ENCODE measurements at regions of chr5 and their contacts with region 1.

Region 1: DNA sequence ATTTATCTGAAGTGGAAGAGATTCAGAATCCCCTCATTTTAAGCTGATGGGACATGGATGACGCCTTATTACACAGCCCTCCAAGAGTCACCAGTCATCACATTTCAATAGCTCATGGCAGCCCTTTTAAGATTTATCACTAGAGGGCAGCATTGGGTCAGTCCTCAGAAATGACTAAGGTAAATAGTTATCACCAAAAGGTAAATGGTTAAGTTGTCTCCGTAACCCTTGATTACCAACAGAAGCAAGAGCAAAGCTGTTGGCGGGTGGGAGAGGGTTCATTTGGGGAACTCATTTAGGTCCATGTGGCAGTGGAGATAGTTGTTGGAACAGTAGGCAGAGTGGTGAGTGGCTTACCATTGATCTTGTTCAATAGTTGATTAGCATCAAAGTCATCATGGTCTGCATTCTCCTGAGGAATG is 12.0 kb upstream of the C9 start:
- DNase-seq: no peak
- H3K4me3 ChIP-seq: no peak overlapping the region
- H3K27ac ChIP-seq: no peak overlapping the region
- H3K4me1 ChIP-seq: peaks cover 0 to 3% (median 0%) of the 10 kb centered on the region in 4 donors
- H3K27me3 ChIP-seq: no peaks in the 10 kb centered on the region
- CTCF ChIP-seq: peak; percentile 47 to 81 (median 70)
- EP300 ChIP-seq: no peak
- POLR2A ChIP-seq: no peak

Region 2: GRCh38 chr5:39217365-39218281 is 158.7 kb before region 1 on chr5:
- intact Hi-C with region 1: loop called (anchors 10 kb)
- DNase-seq: peak; percentile 93
- H3K4me3 ChIP-seq: no peak overlapping the region
- H3K27ac ChIP-seq: peak overlapping the region in 3 of 4 donors; percentile 38 to 74 (median 73)
- H3K4me1 ChIP-seq: peaks cover 0 to 21% (median 13%) of the 10 kb centered on the region in 4 donors
- H3K27me3 ChIP-seq: no peaks in the 10 kb centered on the region
- CTCF ChIP-seq: peak; percentile 88 to 94 (median 90)
- EP300 ChIP-seq: no peak
- POLR2A ChIP-seq: no peak

Region 3: DNA sequence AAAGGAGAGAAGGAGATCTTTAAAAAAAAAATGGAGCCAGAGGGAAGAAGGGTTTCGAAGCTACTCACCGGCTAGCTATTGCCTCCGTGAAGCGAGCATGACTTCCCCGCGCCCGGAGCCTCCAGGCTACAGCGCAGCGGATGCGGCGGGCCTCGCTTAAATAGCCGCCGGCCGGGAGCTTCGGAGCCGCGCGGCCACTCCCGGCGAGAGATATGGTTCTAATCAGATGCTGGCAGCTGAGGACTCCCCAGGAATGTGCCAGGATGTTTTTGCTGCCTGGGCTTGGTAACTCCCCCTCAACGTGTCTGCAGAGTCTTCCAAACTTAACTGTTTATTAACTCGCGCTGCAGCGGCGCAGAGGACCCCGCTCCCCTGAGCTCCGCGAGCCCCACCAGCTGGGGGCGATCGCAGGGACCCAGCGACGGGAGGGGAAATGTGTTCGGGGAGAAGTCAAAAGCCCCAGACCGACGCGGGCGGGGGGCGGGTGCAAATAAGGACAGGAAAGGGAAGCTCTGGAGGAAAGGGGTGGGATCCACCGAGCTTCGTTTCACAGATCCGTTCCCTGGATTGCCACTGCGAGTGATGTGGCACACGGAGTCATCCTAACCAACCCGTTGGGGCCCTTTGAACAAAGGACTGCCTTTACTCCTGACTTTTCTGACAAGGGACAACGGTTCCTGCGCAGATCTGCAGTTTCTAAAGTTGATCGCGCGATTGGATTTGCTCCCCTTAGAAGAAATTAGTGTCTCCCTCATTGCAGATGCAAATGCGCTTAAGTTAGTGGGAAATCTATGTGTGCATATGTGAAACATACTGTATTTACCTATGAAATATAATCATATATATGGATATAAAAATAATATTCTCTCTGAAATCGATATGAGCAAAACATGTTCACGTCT is 48.7 kb after region 1 on chr5 and contains the start of gene DAB2:
- intact Hi-C with region 1: loop called (anchors 5 kb)
- DNase-seq: peak; percentile 92
- H3K4me3 ChIP-seq: peak within 1 kb of the TSS; percentile 51 to 69 (median 60)
- H3K27ac ChIP-seq: peak within 1 kb of the TSS; percentile 84 to 91 (median 87)
- H3K4me1 ChIP-seq: peaks cover 0 to 47% (median 27%) of the 10 kb centered on the region in 4 donors
- H3K27me3 ChIP-seq: no peaks in the 10 kb centered on the region
- CTCF ChIP-seq: peak in 3 of 4 experiments; percentile 38 to 50 (median 43)
- EP300 ChIP-seq: no peak
- POLR2A ChIP-seq: peak in 1 of 2 donors; percentile 68
- total RNA-seq, gene DAB2: 55.0 to 74.1 (median 59.9) TPM

Region 4: GRCh38 chr5:39547553-39548154 is 171.3 kb after region 1 on chr5:
- intact Hi-C with region 1: loop called (anchors 1 kb)
- DNase-seq: no peak
- H3K4me3 ChIP-seq: peak overlapping the region in 1 of 4 donors; percentile 11
- H3K27ac ChIP-seq: peak overlapping the region in 2 of 4 donors; percentile 33 to 55
- H3K4me1 ChIP-seq: peaks cover 0 to 43% (median 17%) of the 10 kb centered on the region in 4 donors
- H3K27me3 ChIP-seq: no peaks in the 10 kb centered on the region
- CTCF ChIP-seq: peak; percentile 56 to 72 (median 62)
- EP300 ChIP-seq: no peak
- POLR2A ChIP-seq: no peak

Region 5: DNA sequence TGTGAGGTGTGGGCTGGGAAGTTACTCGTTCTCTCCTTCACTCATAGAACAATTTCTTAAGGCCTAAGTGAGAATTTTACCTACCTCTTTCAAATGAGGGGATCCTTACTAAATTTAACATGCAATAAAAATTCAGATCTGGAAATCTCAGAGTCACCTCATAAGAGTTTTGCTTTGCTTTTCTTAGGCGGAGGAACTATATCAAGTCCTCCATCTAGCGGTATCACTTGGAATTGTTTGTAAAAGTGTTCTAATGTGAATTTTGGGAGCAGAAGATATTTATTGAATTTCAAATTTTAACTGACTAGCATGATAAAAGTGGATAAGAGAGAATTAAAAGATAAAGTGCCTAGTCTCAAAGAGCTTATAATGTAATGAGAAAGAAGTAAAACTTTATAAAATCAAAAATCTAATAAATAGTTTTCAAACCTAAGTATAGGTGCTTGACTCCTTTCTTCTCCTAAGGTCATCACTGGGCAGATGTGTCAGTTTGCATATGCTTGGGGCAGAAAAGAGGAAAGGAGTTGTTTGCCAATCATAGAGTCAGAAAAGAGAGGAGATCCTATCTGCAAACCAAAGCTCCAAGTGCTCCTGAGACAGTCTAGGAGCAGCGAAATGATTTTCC is 194.2 kb after region 1 on chr5:
- intact Hi-C with region 1: loop called (anchors 5 kb)
- DNase-seq: no peak
- H3K4me3 ChIP-seq: no peak overlapping the region
- H3K27ac ChIP-seq: no peak overlapping the region
- H3K4me1 ChIP-seq: peaks cover 0 to 5% (median 2%) of the 10 kb centered on the region in 4 donors
- H3K27me3 ChIP-seq: no peaks in the 10 kb centered on the region
- CTCF ChIP-seq: peak; percentile 38 to 79 (median 62)
- EP300 ChIP-seq: no peak
- POLR2A ChIP-seq: no peak

Measured in sigmoid colon (tissue), 7 donors.